B cell (primary cell): ENCODE measurements at regions of chr11 and their contacts with region 1.

Region 1: GRCh38 chr11:60970369-60970774 is 1.1 kb upstream of the CD6 start:
- DNase-seq: peak; percentile 83
- ATAC-seq: peak; percentile 91
- H3K4me3 ChIP-seq: peak overlapping the region in 1 of 5 experiments; percentile 5
- H3K4me3 Mint-ChIP-seq: peak overlapping the region; percentile 79
- H3K27ac ChIP-seq: no peak overlapping the region
- H3K27ac Mint-ChIP-seq: peak overlapping the region; percentile 71
- H3K4me1 ChIP-seq: peaks cover 27 to 32% of the 10 kb centered on the region in 2 donors
- H3K4me1 Mint-ChIP-seq: peaks cover 34% of the 10 kb centered on the region
- H3K27me3 ChIP-seq: no peaks in the 10 kb centered on the region
- H3K27me3 Mint-ChIP-seq: no peaks in the 10 kb centered on the region
- CTCF ChIP-seq: peak; percentile 94

Region 2: DNA sequence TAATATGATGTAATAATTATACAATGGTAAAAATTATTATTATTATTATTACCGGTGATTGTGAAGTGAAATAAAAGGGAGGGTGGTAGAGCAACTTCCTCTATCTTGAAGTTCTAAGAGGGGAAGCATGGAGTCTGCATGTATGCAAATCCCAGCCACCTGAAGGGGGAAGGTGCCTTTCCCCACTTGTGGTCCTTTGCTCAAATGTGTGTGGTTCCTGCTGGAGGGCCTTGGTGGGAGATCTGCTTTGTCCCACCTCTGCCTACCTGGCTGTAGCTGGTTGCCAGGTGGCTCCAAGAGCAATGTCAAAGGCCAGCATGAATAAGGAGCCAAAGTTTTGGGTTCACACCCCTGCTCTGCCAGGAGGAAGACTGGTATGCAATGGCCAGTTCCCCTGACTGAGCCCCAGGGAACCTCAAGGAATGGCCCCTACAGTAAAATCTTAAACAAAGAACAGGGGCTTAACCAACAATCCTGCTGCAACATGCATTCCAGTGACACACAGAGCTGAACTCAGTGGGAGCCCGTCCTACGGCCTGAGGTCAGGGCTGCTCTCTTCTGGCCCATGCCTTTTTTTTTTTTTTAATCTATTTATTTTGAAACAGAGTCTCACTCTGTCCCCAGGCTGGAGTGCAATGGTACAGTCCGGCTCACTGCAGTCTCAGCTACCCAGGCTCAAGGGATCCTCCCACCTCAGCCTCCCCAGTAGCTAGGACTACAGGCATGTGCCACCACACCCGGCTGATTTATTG is 37.6 kb before region 1 on chr11:
- CTCF ChIA-PET with region 1: interaction called, 4 read pairs
- POLR2A ChIA-PET with region 1: no interaction called
- intact Hi-C with region 1: loop called (anchors 1 kb)
- DNase-seq: peak; percentile 80
- ATAC-seq: peak; percentile 52
- H3K4me3 ChIP-seq: peak overlapping the region in 1 of 5 experiments; percentile 56
- H3K4me3 Mint-ChIP-seq: peak overlapping the region; percentile 74
- H3K27ac ChIP-seq: peak overlapping the region; percentile 72 to 90
- H3K27ac Mint-ChIP-seq: peak overlapping the region; percentile 91
- H3K4me1 ChIP-seq: peaks cover 26 to 44% of the 10 kb centered on the region in 2 donors
- H3K4me1 Mint-ChIP-seq: peaks cover 46% of the 10 kb centered on the region
- H3K27me3 ChIP-seq: no peaks in the 10 kb centered on the region
- H3K27me3 Mint-ChIP-seq: no peaks in the 10 kb centered on the region
- CTCF ChIP-seq: no peak

Region 3: GRCh38 chr11:60959431-60959830 is 10.9 kb before region 1 on chr11:
- CTCF ChIA-PET with region 1: interaction called, 12 read pairs
- POLR2A ChIA-PET with region 1: no interaction called
- intact Hi-C with region 1: no loop called
- DNase-seq: no peak
- ATAC-seq: no peak
- H3K4me3 ChIP-seq: no peak overlapping the region
- H3K4me3 Mint-ChIP-seq: no peak overlapping the region
- H3K27ac ChIP-seq: no peak overlapping the region
- H3K27ac Mint-ChIP-seq: no peak overlapping the region
- H3K4me1 ChIP-seq: peaks cover 2 to 13% of the 10 kb centered on the region in 2 donors
- H3K4me1 Mint-ChIP-seq: peaks cover 6% of the 10 kb centered on the region
- H3K27me3 ChIP-seq: no peaks in the 10 kb centered on the region
- H3K27me3 Mint-ChIP-seq: peaks cover 5% of the 10 kb centered on the region
- CTCF ChIP-seq: no peak

Region 4: GRCh38 chr11:61041755-61042518 is 71.6 kb after region 1 on chr11:
- CTCF ChIA-PET with region 1: interaction called, 15 read pairs
- POLR2A ChIA-PET with region 1: interaction called, 4 read pairs
- intact Hi-C with region 1: no loop called
- DNase-seq: peak; percentile 63
- ATAC-seq: peak; percentile 91
- H3K4me3 ChIP-seq: peak overlapping the region in 4 of 5 experiments; percentile 13 to 49 (median 34)
- H3K4me3 Mint-ChIP-seq: peak overlapping the region; percentile 88
- H3K27ac ChIP-seq: peak overlapping the region; percentile 84 to 87
- H3K27ac Mint-ChIP-seq: peak overlapping the region; percentile 95
- H3K4me1 ChIP-seq: peaks cover 15 to 17% of the 10 kb centered on the region in 2 donors
- H3K4me1 Mint-ChIP-seq: peaks cover 29% of the 10 kb centered on the region
- H3K27me3 ChIP-seq: no peaks in the 10 kb centered on the region
- H3K27me3 Mint-ChIP-seq: no peaks in the 10 kb centered on the region
- CTCF ChIP-seq: no peak

Region 5: GRCh38 chr11:61129639-61130523 is 159.5 kb after region 1 on chr11:
- CTCF ChIA-PET with region 1: interaction called, 8 read pairs
- POLR2A ChIA-PET with region 1: no interaction called
- intact Hi-C with region 1: loop called (anchors 1 kb)
- DNase-seq: peak; percentile 90
- ATAC-seq: peak; percentile 100
- H3K4me3 ChIP-seq: no peak overlapping the region
- H3K4me3 Mint-ChIP-seq: no peak overlapping the region
- H3K27ac ChIP-seq: no peak overlapping the region
- H3K27ac Mint-ChIP-seq: no peak overlapping the region
- H3K4me1 ChIP-seq: peaks cover 9% of the 10 kb centered on the region in 2 donors
- H3K4me1 Mint-ChIP-seq: peaks cover 4% of the 10 kb centered on the region
- H3K27me3 ChIP-seq: no peaks in the 10 kb centered on the region
- H3K27me3 Mint-ChIP-seq: no peaks in the 10 kb centered on the region
- CTCF ChIP-seq: peak; percentile 100